ENCODE measurements at regions of chr13 and their contacts with region 1.

Region 1: DNA sequence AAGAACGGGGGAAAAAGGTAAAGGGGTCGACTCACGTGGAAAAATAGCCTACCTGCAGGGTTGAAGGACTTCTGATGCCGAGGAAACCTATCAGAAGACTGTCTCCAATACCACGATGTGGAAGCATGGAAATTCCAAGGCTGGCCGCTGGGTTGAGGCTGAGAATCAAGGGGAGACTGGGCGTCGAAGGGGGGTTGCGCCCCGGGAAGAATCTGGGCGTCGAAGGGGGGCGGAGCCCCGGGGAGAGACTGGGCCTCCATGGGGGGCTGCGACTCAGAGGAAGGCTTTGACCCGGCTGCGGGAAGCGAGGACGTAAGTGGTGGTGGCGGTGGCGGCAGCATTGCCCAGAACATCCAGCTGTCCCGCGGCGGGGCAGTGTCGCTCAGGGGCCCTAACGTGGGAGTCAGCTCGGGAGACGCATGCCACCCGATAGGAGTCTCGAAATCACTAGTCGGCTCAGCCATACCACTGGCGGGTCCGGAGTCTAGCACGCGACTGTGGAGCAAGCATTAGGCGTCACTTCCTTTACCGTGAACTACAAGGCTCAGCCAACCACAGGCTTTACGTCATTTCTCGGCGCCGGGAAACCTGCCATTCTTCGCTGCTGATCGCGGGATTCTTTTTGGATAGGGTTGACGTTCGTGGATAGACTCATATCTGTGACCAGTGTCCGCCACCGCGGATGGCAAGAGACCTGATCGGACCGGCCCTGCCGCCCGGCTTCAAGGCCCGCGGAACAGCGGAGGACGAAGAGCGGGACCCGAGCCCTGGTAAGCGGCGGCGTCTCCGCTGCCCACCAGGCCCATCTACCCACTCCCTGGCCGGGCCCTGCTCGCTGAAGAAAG is at the starts of genes GPALPP1 and NUFIP1:
- DNase-seq: peak in 1 of 2 donors; percentile 90
- H3K4me3 ChIP-seq: peak within 1 kb of the TSS; percentile 92
- H3K27ac ChIP-seq: peak within 1 kb of the TSS; percentile 79
- H3K4me1 ChIP-seq: peaks cover 46% of the 10 kb centered on the region
- H3K27me3 ChIP-seq: no peaks in the 10 kb centered on the region
- CTCF ChIP-seq: peak in 1 of 3 experiments; percentile 37
- POLR2A ChIP-seq: no peak
- total RNA-seq, gene GPALPP1: 20.9 TPM
- total RNA-seq, gene NUFIP1: 2.5 TPM

Region 2: DNA sequence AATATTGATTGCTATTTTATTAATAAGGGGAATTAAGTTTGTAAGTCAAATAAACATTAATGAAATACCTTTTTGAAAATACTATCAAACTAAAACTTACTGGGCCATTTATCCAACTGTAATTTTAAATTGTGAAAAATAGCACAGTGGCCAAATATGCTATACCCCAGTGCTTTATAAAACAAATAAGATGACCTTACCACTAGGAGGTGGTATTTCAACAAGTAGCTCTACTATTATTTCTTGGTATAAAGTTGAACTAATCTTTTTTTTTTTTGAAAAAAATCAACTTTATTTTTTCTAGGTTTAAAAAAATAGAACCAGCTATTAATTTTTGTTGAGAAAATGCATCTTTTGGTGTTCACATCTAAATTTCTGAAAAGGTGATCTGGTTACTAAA is 1094.8 kb before region 1 on chr13:
- intact Hi-C with region 1: loop called (anchors 10 kb)
- DNase-seq: no peak
- H3K4me3 ChIP-seq: no peak overlapping the region
- H3K27ac ChIP-seq: no peak overlapping the region
- H3K4me1 ChIP-seq: no peaks in the 10 kb centered on the region
- H3K27me3 ChIP-seq: no peaks in the 10 kb centered on the region
- CTCF ChIP-seq: no peak
- POLR2A ChIP-seq: no peak

Region 3: DNA sequence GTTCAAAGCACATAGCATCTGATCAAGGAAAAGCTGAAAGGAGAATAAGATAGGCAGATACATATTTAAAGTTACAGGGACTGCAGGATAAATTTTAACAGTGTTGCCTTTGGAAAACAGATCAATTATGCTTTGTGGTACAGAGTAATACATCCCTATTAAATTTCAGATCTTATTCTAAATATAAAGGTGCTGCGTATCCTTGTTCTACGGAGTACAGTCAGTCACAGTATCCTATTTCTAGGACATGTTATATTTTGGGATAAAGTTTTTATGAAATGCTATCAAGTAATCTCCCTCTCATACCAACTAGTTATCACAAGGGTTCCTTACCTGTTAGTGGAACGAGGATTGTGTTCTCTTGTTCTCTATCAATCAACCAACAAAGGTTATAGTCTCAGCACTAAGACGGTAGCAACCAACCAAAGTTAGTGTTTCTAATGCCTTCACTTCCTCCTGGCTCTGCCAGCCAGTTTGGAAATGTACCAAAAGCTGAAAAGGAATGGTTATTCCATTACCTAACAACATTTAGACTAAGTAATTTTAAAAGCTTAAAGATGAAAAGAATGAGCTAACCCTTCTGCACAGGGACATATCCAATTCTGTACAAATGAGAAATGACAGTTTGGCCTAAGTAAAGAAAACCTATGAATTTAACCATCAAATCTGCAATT is 448.3 kb before region 1 on chr13:
- intact Hi-C with region 1: no loop called
- DNase-seq: no peak
- H3K4me3 ChIP-seq: no peak overlapping the region
- H3K27ac ChIP-seq: no peak overlapping the region
- H3K4me1 ChIP-seq: no peaks in the 10 kb centered on the region
- H3K27me3 ChIP-seq: no peaks in the 10 kb centered on the region
- CTCF ChIP-seq: no peak
- POLR2A ChIP-seq: no peak

Region 4: GRCh38 chr13:45249662-45250061 is 260.5 kb after region 1 on chr13:
- intact Hi-C with region 1: no loop called
- DNase-seq: no peak
- H3K4me3 ChIP-seq: no peak overlapping the region
- H3K27ac ChIP-seq: no peak overlapping the region
- H3K4me1 ChIP-seq: no peaks in the 10 kb centered on the region
- H3K27me3 ChIP-seq: no peaks in the 10 kb centered on the region
- CTCF ChIP-seq: no peak
- POLR2A ChIP-seq: no peak